Activated naive CD4-positive, alpha-beta T cell treated with anti-CD3 and anti-CD28 coated beads, Interleukin-2, amount 10 ng/mL, durations not matched to agents 7 days and 5 days (primary cell): ENCODE measurements at regions of chr3 and their contacts with region 1.

Region 1: DNA sequence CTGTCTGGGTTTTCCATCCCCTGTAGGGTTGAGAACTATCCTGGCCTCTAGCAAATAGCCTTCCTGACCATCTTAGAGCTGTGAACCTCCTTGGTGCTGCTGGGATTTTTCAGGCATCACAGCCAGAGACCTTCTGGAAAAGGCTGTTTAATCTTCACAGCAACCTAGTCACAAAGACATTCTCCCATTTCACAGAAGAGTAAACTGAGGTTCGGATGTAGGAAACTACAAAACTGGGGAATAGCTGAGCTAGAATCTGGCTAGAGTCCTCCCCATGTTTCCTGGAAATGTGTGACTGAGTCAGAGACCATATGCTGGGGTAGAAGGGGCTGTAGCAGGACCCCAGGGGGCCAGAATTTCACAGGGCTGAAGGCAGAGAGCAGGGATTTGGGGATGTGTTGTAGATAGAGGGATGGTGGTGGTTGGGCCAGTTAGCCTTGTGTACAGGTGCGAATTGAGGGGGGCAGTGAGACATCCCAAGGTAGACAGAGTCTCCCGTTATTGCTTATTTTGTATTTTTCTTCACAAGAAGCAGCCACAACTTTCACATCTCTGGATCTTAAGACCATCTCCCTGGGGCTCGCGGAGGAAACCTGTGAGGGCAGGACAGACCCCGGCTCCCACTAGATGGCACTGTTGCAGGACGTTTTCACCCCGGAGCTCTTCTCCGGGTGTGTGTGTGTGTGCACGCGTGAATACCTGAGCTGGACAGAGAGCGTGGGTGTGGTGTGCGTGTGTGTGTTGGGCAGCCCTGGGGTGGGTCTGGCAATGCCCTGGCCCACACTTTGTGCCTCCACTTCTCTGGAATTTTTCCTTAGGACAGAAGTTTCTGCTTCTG is 66.9 kb upstream of the PRR23C start:
- DNase-seq: peak; percentile 74
- H3K4me3 Mint-ChIP-seq: no peak overlapping the region
- H3K27ac Mint-ChIP-seq: no peak overlapping the region
- H3K4me1 Mint-ChIP-seq: peaks cover 10% of the 10 kb centered on the region
- H3K27me3 Mint-ChIP-seq: peaks cover 35% of the 10 kb centered on the region

Region 2: DNA sequence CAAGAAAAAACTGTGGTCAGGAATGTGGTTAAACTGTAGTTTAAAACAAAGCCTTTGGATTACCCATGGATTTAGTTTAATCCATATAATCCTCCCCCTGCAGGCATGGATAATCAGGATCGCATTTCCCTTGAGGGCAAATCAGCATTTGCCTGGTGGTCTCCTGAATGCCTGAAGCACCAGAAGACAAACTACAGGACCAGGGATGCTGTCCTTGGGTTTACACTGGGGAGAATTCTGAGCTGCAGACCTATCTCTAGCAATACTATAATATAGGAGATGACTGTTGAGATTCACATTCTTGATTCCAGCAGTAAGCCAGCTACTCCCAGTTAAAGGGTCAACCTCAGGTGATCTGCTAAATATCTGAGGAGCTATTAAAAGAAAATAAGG is 287.5 kb before region 1 on chr3:
- CTCF ChIA-PET with region 1: no interaction called
- DNase-seq: no peak
- H3K4me3 Mint-ChIP-seq: no peak overlapping the region
- H3K27ac Mint-ChIP-seq: no peak overlapping the region
- H3K4me1 Mint-ChIP-seq: no peaks in the 10 kb centered on the region
- H3K27me3 Mint-ChIP-seq: no peaks in the 10 kb centered on the region

Region 3: DNA sequence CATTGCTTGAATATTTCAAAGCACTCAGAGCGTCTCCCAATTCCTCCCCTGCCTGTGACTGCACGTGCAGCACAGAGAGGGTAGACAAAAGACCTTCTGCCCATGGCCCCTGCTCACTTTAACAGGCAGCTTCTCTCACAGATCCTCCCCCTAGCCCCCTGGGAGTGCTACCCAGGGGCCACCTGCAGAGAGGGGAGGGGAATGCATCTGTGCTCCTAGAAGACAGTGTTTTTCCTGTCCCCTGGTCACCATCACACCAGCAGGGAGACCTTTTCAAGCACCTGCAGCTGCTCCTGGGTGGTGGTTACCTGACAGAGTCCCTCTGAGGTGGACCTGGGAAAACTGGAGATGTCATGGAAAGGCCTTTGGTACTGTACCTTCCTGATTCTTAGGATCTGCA is 10.2 kb before region 1 on chr3:
- CTCF ChIA-PET with region 1: interaction called, 10 read pairs
- DNase-seq: no peak
- H3K4me3 Mint-ChIP-seq: no peak overlapping the region
- H3K27ac Mint-ChIP-seq: no peak overlapping the region
- H3K4me1 Mint-ChIP-seq: no peaks in the 10 kb centered on the region
- H3K27me3 Mint-ChIP-seq: peaks cover 16% of the 10 kb centered on the region

Region 4: GRCh38 chr3:139202226-139202958 is 90.8 kb after region 1 on chr3:
- CTCF ChIA-PET with region 1: interaction called, 16 read pairs
- DNase-seq: peak; percentile 27
- H3K4me3 Mint-ChIP-seq: no peak overlapping the region
- H3K27ac Mint-ChIP-seq: no peak overlapping the region
- H3K4me1 Mint-ChIP-seq: no peaks in the 10 kb centered on the region
- H3K27me3 Mint-ChIP-seq: peaks cover 23% of the 10 kb centered on the region

Region 5: DNA sequence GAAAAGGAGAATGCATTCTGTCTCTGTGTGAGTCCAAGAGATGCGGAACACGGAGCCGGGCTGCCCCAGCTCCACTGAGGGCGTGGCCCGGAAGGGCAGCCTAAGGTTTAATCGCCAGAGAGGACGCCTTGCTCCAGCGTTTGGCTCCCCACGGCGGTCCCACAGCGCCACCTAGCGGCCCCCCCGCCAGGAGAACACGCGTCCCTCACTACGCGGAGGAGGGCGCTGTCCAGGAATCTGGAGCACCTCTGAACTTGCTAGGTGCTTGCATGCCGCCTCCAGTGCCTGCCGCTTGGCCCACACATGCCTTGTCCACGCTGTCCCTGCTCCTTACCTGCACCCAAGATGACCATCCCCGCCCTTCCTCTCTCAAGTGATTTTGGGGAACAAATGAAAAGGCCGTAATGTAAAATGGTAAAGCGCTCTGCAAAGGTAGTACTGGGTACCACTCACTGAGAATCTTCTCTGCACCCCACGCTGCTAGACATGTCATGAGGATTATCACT is 217.8 kb after region 1 on chr3:
- CTCF ChIA-PET with region 1: interaction called, 69 read pairs
- DNase-seq: peak; percentile 91
- H3K4me3 Mint-ChIP-seq: peak overlapping the region; percentile 55
- H3K27ac Mint-ChIP-seq: no peak overlapping the region
- H3K4me1 Mint-ChIP-seq: peaks cover 18% of the 10 kb centered on the region
- H3K27me3 Mint-ChIP-seq: peaks cover 20% of the 10 kb centered on the region